ENCODE measurements at regions of chr9 and their contacts with region 1.

Region 1: DNA sequence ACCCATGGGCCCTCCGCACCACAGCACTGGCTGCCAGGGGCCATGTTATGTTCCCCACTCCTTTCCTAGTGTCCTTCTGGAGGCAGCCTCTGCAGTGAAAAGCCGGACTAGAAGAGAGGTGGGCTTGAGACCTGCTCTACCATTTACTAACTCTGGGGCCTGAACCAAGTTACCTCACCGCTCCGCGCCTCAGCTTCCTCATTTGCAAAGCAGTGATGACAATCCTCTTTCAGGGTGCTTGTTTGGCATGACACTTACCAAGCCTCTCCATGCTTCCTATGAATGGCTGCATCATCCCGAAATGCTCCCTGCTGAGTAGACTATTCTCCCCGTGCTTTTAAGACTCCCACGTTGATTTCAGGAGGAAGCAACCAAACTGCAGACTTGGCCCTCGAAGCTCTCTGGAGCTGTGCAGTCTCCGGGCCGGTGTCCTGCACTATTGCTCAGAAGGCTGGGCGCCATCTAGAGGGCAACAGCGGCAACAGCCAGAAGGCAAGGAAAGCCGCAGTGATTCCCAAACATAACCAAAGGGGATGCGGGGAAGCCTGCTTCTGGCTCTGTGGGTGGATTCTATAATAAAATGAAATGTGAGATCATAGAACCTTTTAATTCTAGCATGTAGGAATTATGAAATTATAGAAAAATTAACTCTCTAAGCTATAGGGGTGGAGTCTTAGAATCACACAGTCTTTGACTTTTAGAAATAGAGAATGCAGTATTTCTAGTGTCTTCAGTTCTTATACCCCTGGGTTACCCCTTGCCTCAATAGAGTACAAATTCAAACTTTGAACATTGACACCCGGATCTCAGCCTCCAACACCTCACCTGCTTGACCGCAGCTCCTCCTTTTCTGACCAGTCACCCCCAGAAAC is 599.8 kb upstream of the BRINP1 start:
- DNase-seq: peak; percentile 76
- H3K4me3 ChIP-seq: no peak overlapping the region; a peak in 1 of 4 replicates
- H3K27ac ChIP-seq: no peak overlapping the region
- H3K4me1 ChIP-seq: no peaks in the 10 kb centered on the region; a peak in 1 of 4 replicates
- H3K27me3 ChIP-seq: no peaks in the 10 kb centered on the region
- CTCF ChIP-seq: peak; percentile 94
- EP300 ChIP-seq: no peak
- RAD21 ChIP-seq: peak; percentile 86

Region 2: DNA sequence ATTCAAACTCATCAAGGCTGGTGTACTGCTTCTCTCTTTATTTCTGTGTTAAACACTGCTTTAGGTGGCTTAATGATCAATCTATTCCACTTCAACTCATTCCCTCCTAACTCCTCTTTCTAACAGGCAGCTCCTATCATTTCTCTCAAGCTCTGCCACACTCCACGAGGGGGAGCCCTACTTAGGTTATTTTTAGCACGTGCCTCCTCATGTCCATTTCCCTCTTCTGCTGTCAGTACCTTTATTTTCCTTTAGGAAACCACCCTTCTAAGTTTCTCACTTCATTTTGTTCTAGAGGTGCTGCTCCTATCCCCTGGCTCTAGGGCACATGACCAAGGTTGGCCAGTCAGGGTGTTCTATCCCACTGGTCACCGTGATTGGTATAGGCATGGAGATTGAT is 593.2 kb before region 1 on chr9:
- CTCF ChIA-PET with region 1: interaction called, 17 read pairs
- POLR2A ChIA-PET with region 1: no interaction called
- DNase-seq: peak; percentile 32
- H3K4me3 ChIP-seq: peak overlapping the region in 1 of 2 experiments; percentile 37; a peak in 1 of 4 replicates
- H3K27ac ChIP-seq: no peak overlapping the region
- H3K4me1 ChIP-seq: no peaks in the 10 kb centered on the region
- H3K27me3 ChIP-seq: no peaks in the 10 kb centered on the region
- CTCF ChIP-seq: peak; percentile 63
- EP300 ChIP-seq: no peak
- RAD21 ChIP-seq: peak; percentile 52

Region 3: GRCh38 chr9:119877306-119877705 is 91.8 kb before region 1 on chr9:
- CTCF ChIA-PET with region 1: no interaction called
- POLR2A ChIA-PET with region 1: no interaction called
- DNase-seq: no peak
- H3K4me3 ChIP-seq: no peak overlapping the region
- H3K27ac ChIP-seq: no peak overlapping the region
- H3K4me1 ChIP-seq: no peaks in the 10 kb centered on the region; a peak in 1 of 4 replicates
- H3K27me3 ChIP-seq: no peaks in the 10 kb centered on the region
- CTCF ChIP-seq: no peak
- EP300 ChIP-seq: no peak
- RAD21 ChIP-seq: no peak

Region 4: DNA sequence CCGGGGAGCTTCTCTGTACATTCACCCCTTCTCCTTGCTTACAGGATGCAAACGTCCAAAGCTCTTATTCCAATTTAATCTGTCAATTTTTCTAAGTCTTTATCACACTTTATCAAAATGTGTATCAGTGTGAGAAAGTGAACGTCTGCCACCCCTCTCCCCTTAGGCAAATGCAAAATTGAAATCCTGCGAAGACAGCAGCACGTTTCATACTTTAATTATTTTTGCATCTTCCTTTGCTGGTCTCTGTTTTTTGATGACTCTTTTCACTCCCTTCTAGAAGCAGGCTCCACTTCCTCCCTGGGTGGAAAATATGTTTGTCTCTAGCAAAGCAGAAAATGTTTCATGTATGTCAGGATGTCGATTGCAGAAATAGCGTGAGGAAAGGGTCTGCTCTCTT is 23.4 kb before region 1 on chr9:
- CTCF ChIA-PET with region 1: interaction called, 13 read pairs
- POLR2A ChIA-PET with region 1: no interaction called
- DNase-seq: no peak
- H3K4me3 ChIP-seq: no peak overlapping the region
- H3K27ac ChIP-seq: no peak overlapping the region
- H3K4me1 ChIP-seq: no peaks in the 10 kb centered on the region; a peak in 1 of 4 replicates
- H3K27me3 ChIP-seq: no peaks in the 10 kb centered on the region
- CTCF ChIP-seq: no peak
- EP300 ChIP-seq: no peak
- RAD21 ChIP-seq: no peak

Region 5: GRCh38 chr9:119986213-119986612 is 17.1 kb after region 1 on chr9:
- CTCF ChIA-PET with region 1: interaction called, 15 read pairs
- POLR2A ChIA-PET with region 1: no interaction called
- DNase-seq: no peak
- H3K4me3 ChIP-seq: no peak overlapping the region
- H3K27ac ChIP-seq: no peak overlapping the region
- H3K4me1 ChIP-seq: no peaks in the 10 kb centered on the region; a peak in 1 of 4 replicates
- H3K27me3 ChIP-seq: no peaks in the 10 kb centered on the region
- CTCF ChIP-seq: no peak
- EP300 ChIP-seq: no peak
- RAD21 ChIP-seq: no peak; the same call in 1 of the 2 replicates

Region 6: GRCh38 chr9:119998614-119999013 is 29.5 kb after region 1 on chr9:
- CTCF ChIA-PET with region 1: interaction called, 16 read pairs
- POLR2A ChIA-PET with region 1: no interaction called
- DNase-seq: no peak
- H3K4me3 ChIP-seq: no peak overlapping the region
- H3K27ac ChIP-seq: no peak overlapping the region; a peak in 1 of 4 replicates
- H3K4me1 ChIP-seq: peaks cover 0 to 13% of the 10 kb centered on the region in 2 experiments; a peak in 1 of 4 replicates
- H3K27me3 ChIP-seq: no peaks in the 10 kb centered on the region
- CTCF ChIP-seq: no peak
- EP300 ChIP-seq: no peak
- RAD21 ChIP-seq: no peak

Measured in SK-N-SH (cell line).